ENCODE measurements at regions of chr11 and their contacts with region 1.

Region 1: DNA sequence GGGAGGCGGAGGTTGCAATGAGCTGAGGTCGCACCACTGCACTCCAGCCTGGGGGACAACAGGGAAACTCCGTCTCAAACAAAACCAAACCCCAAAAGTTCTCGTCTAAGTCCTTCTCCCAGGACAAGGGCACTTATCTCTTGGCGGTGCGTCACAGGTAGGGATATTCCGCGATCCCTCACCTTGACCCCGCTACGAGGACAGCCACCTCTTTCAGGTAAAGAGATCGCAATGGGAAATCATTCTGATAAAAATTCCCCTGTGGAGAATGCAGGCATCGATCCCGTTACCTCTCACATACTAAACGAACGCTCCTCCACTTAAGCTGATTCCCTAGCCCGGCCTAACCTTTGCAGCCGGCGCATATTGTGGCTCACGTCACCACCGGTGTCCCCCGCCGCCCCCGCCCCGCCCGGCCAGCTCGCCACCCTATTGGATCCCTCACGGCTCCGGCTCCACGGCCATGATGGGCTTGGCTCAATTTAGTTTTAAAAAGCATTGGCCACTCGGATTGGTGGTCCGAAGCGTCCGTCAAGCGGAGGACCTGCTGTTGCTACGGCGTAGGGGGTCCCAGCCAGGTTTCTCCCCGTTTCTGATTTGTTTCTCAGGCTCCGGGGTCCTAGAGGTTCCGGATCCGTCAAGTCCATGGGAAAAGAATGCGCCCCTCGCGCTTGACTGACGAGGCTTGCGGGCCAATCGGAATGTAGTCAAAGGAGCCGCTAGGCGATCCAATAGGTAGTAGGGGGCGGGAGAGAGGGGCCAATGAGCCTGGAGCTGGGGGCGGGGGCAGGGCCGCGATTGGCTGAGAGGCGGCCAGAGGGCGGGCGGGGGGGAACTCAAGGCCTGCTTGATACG is 439 bp upstream of the PPP6R3 start:
- DNase-seq: peak; percentile 97 to 98
- ATAC-seq: peak; percentile 88 to 89
- H3K4me3 ChIP-seq: peak overlapping the region; percentile 61 to 76 (median 68)
- H3K27ac ChIP-seq: peak overlapping the region; percentile 85 to 94 (median 90)
- H3K4me1 ChIP-seq: peaks cover 32 to 34% of the 10 kb centered on the region in 2 donors
- H3K27me3 ChIP-seq: no peaks in the 10 kb centered on the region
- CTCF ChIP-seq: no peak
- POLR2A ChIP-seq: no peak

Region 2: GRCh38 chr11:68528630-68529029 is 68.5 kb after region 1 on chr11:
- in situ Hi-C with region 1: no loop called
- intact Hi-C with region 1: loop called (anchors 5 kb)
- DNase-seq: peak; percentile 80 to 83
- ATAC-seq: peak; percentile 93 to 94
- H3K4me3 ChIP-seq: no peak overlapping the region
- H3K27ac ChIP-seq: peak overlapping the region; percentile 84 to 86 (median 85)
- H3K4me1 ChIP-seq: peaks cover 89 to 95% of the 10 kb centered on the region in 2 donors
- H3K27me3 ChIP-seq: no peaks in the 10 kb centered on the region
- CTCF ChIP-seq: no peak
- POLR2A ChIP-seq: peak; percentile 16 to 19

Region 3: DNA sequence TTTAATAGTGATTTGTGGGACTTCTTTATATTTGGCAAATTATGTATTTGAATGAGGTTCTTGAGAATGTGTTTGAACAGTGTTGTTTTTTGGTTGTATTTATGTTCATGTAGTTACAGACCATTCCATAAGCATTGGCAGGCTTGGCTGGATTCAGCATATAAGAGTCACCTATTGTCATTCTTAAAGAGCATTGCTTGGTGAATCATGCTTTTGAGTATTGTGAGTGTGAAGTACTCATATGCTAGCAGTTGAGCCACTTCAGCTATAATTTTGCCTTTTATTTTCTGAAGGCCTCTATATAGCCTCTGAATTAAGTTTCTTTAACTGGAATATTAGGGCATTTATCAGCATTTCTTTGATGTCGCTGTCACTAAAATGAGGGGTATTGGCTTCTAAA is 114.2 kb after region 1 on chr11:
- in situ Hi-C with region 1: loop called in 3 of 4 experiments (anchors 10 to 25 kb)
- intact Hi-C with region 1: no loop called
- DNase-seq: no peak
- ATAC-seq: no peak
- H3K4me3 ChIP-seq: no peak overlapping the region
- H3K27ac ChIP-seq: peak overlapping the region; percentile 58 to 76 (median 66)
- H3K4me1 ChIP-seq: peaks cover 67 to 76% of the 10 kb centered on the region in 2 donors
- H3K27me3 ChIP-seq: no peaks in the 10 kb centered on the region
- CTCF ChIP-seq: no peak
- POLR2A ChIP-seq: no peak

Region 4: DNA sequence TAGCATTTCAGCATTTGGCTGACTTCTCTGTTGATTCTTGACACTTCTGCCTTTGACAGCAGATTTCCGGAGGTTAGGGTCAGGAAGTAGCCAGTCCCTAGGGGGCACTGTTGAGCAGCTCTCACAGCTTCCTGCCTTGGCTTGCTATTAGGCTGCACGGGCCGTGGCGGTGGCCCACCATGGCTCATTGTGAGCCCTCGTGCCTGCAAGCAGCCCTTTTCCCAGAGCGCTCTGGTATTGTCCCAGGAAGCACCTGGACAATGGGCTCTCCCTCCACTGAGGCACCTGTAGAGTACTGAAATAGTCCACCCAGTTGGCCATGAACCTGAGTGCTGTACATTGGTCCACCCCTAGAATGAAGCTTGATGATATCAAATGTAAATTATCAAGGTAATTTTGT is 124.0 kb after region 1 on chr11:
- in situ Hi-C with region 1: loop called in 3 of 4 experiments (anchors 10 to 25 kb)
- intact Hi-C with region 1: loop called (anchors 1 kb)
- DNase-seq: peak in 1 of 2 donors; percentile 36
- ATAC-seq: no peak
- H3K4me3 ChIP-seq: no peak overlapping the region
- H3K27ac ChIP-seq: peak overlapping the region; percentile 31 to 89 (median 82)
- H3K4me1 ChIP-seq: peaks cover 48 to 54% of the 10 kb centered on the region in 2 donors
- H3K27me3 ChIP-seq: no peaks in the 10 kb centered on the region
- CTCF ChIP-seq: peak in 4 of 5 experiments; percentile 48 to 62 (median 56)
- POLR2A ChIP-seq: no peak

Region 5: DNA sequence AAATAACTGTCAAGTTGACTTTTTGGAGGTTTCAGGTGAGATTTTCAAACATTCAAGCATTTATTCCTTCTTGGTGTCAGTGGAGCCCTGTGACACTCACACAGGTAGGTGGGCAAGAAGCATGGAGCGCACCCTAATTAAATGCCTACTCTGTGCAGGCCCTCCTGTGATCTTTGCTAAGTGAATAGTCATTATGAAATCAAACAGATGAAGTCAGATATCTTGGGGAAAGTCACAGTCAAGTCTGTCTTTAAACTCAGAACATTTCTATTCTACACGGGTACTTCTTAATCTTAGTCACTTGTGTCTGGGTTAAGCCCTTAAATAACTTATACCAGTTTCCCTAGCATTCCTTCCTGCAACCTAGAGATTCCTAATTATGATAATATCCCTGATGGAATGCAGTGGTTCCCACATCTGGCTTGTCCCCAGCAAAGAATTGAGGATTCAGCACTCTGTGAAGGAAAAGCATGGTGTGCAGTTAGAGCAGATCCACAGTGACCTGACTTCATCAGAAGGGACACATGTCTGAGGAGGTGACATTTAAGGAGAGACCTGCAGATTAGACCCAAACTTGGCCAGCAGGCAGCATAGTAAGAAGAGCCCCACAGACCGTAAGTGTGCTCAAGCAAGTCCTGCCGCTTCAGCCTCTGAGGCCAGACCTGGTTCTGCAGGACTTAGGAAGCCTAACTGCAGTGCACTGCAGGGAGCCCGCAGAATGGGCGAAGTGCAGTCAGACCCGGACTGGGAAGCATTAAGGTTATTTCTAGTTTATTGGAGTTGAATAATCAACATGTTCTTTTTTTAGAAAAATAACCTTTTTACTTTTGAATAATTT is 138.9 kb after region 1 on chr11:
- in situ Hi-C with region 1: loop called in 3 of 4 experiments (anchors 10 to 25 kb)
- intact Hi-C with region 1: no loop called
- DNase-seq: no peak
- ATAC-seq: no peak
- H3K4me3 ChIP-seq: no peak overlapping the region
- H3K27ac ChIP-seq: no peak overlapping the region
- H3K4me1 ChIP-seq: no peaks in the 10 kb centered on the region
- H3K27me3 ChIP-seq: no peaks in the 10 kb centered on the region
- CTCF ChIP-seq: no peak
- POLR2A ChIP-seq: no peak

Measured in gastrocnemius medialis (tissue), 4 donors.